ENCODE measurements at regions of chr10 and their contacts with region 1.

Region 1: GRCh38 chr10:119859420-119860258 is 13.0 kb downstream of the MCMBP start:
- DNase-seq: peak; percentile 24 to 47
- ATAC-seq: peak in 1 of 2 experiments; percentile 63; a peak in 3 of 6 replicates
- H3K4me3 ChIP-seq: no peak overlapping the region
- H3K27ac ChIP-seq: no peak overlapping the region
- H3K4me1 ChIP-seq: peaks cover 15% of the 10 kb centered on the region
- CTCF ChIP-seq: peak; percentile 80
- EP300 ChIP-seq: no peak
- POLR2A ChIP-seq: no peak
- RAD21 ChIP-seq: peak; percentile 68 to 75

Region 2: DNA sequence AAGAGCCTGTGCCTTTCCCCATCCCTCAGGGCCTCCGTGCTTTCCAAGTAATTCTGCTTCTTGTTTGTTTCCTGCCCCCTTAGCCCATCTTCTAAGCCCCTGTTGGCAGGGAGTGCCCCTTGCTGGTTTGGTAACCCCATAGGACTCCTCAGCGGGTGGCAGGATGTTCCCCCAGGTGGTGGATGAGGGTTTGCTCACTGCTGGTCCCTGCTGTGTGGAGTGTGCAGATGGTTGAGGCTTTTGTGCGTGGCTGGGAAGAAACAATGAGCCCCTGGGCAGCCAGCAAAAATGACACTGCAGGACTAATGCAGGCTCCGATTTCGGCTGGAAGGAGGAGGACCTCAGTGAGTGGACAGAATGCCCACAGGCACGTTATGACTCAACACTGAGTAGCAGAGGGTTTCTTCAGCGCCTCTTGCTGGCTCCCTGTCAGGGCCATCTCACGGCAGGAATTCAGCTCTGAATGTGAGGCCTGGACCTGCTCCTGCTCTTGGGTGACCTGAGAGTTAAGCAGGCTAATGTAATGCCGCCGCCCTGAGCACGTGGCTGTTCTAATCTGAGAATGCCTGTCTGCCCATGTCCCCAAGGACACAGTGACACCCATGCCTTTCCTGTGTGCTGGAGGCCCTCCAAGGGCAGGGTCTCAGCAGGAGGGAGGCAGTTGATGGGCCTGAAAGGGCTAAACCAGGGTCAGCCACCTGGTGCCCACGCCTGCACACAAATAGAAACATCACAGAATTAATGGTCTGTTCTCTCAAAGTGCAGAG is 191.9 kb before region 1 on chr10:
- CTCF ChIA-PET with region 1: interaction called, 10 read pairs
- POLR2A ChIA-PET with region 1: no interaction called
- DNase-seq: peak; percentile 82 to 92
- ATAC-seq: peak; percentile 92 to 94
- H3K4me3 ChIP-seq: 0 out of 3 replicates have a peak overlapping the region, but pooled peaks have one; percentile 20
- H3K27ac ChIP-seq: peak overlapping the region; percentile 84 to 91
- H3K4me1 ChIP-seq: peaks cover 83% of the 10 kb centered on the region
- CTCF ChIP-seq: peak; percentile 20; the same call in 2 of the 3 replicates
- EP300 ChIP-seq: peak in 1 of 2 experiments; percentile 25; a peak in 1 of 5 replicates
- POLR2A ChIP-seq: no peak
- RAD21 ChIP-seq: peak; percentile 36 to 53; a peak in 4 of 5 replicates

Region 3: DNA sequence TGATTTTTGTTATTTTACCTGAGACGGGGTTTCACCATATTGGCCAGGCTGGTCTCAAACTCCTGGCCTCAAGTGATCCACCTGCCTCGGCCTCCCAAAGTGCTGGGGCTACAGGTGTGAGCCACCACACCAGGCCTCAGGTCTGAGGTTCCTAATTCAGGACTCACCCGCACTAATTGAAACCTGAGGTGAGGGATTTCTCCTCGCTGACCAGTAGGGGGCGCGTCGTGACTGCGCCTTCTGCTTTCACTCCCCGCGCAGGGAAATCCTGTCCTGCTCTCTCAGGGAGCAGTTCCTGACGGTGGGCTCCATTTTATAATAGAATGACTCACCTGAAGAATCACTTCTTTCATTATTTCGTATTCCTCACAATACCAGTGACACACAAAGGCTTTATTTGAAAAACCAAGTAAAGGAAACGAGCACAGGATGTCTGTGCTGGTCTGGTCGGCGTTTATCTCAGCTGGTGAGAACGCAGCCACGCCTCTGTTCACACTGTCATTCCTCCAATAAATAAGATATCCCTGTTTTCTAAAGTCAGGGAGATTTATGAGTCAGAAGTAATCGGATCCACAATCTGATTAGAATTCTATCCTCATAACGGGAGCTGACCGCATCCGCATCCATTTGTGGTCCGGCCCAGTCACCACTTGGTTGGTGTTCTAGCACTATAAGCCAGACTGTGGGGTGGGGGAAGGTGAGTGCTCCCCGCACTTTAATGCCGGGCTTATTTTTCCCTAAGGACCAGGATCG is 173.0 kb before region 1 on chr10:
- CTCF ChIA-PET with region 1: interaction called, 41 read pairs
- POLR2A ChIA-PET with region 1: no interaction called
- DNase-seq: peak; percentile 81
- ATAC-seq: peak; percentile 82 to 90
- H3K4me3 ChIP-seq: no peak overlapping the region
- H3K27ac ChIP-seq: peak overlapping the region in 1 of 2 experiments; percentile 42; a peak in 1 of 6 replicates
- H3K4me1 ChIP-seq: peaks cover 13% of the 10 kb centered on the region
- CTCF ChIP-seq: peak; percentile 92
- EP300 ChIP-seq: no peak
- POLR2A ChIP-seq: no peak
- RAD21 ChIP-seq: peak; percentile 90 to 93

Region 4: GRCh38 chr10:119742947-119743648 is 116.5 kb before region 1 on chr10:
- CTCF ChIA-PET with region 1: interaction called, 102 read pairs
- POLR2A ChIA-PET with region 1: no interaction called
- DNase-seq: no peak
- ATAC-seq: peak; percentile 59 to 66; a peak in 3 of 6 replicates
- H3K4me3 ChIP-seq: no peak overlapping the region
- H3K27ac ChIP-seq: no peak overlapping the region
- H3K4me1 ChIP-seq: peaks cover 14% of the 10 kb centered on the region
- CTCF ChIP-seq: no peak
- EP300 ChIP-seq: no peak
- POLR2A ChIP-seq: no peak
- RAD21 ChIP-seq: no peak

Region 5: GRCh38 chr10:119769886-119770285 is 89.8 kb before region 1 on chr10:
- CTCF ChIA-PET with region 1: interaction called, 11 read pairs
- POLR2A ChIA-PET with region 1: no interaction called
- DNase-seq: no peak
- ATAC-seq: no peak
- H3K4me3 ChIP-seq: no peak overlapping the region
- H3K27ac ChIP-seq: no peak overlapping the region
- H3K4me1 ChIP-seq: no peaks in the 10 kb centered on the region
- CTCF ChIP-seq: no peak
- EP300 ChIP-seq: no peak
- POLR2A ChIP-seq: no peak
- RAD21 ChIP-seq: no peak

Region 6: GRCh38 chr10:119834188-119834587 is 25.5 kb before region 1 on chr10:
- CTCF ChIA-PET with region 1: interaction called, 12 read pairs
- POLR2A ChIA-PET with region 1: no interaction called
- DNase-seq: no peak
- ATAC-seq: no peak
- H3K4me3 ChIP-seq: no peak overlapping the region
- H3K27ac ChIP-seq: no peak overlapping the region
- H3K4me1 ChIP-seq: 0 out of 3 replicates have a peak, but pooled peaks cover 8% of the 10 kb centered on the region
- CTCF ChIP-seq: no peak
- EP300 ChIP-seq: no peak
- POLR2A ChIP-seq: no peak
- RAD21 ChIP-seq: no peak

Region 7: GRCh38 chr10:119872860-119873681 is 13.4 kb after region 1 on chr10:
- CTCF ChIA-PET with region 1: interaction called, 44 read pairs
- POLR2A ChIA-PET with region 1: interaction called, 5 read pairs
- DNase-seq: peak; percentile 49 to 86
- ATAC-seq: peak; percentile 90 to 97
- H3K4me3 ChIP-seq: peak overlapping the region; percentile 83
- H3K27ac ChIP-seq: peak overlapping the region; percentile 94 to 98
- H3K4me1 ChIP-seq: peaks cover 21% of the 10 kb centered on the region; the same call in 2 of the 3 replicates
- CTCF ChIP-seq: no peak
- EP300 ChIP-seq: no peak
- POLR2A ChIP-seq: peak; percentile 69
- RAD21 ChIP-seq: no peak

Region 8: GRCh38 chr10:119917750-119918149 is 58.1 kb after region 1 on chr10:
- CTCF ChIA-PET with region 1: no interaction called
- POLR2A ChIA-PET with region 1: no interaction called
- DNase-seq: no peak
- ATAC-seq: peak in 1 of 2 experiments; percentile 50; a peak in 2 of 6 replicates
- H3K4me3 ChIP-seq: no peak overlapping the region
- H3K27ac ChIP-seq: no peak overlapping the region
- H3K4me1 ChIP-seq: no peaks in the 10 kb centered on the region
- CTCF ChIP-seq: peak; percentile 14; the same call in 1 of the 3 replicates
- EP300 ChIP-seq: no peak
- POLR2A ChIP-seq: no peak
- RAD21 ChIP-seq: no peak

Region 9: DNA sequence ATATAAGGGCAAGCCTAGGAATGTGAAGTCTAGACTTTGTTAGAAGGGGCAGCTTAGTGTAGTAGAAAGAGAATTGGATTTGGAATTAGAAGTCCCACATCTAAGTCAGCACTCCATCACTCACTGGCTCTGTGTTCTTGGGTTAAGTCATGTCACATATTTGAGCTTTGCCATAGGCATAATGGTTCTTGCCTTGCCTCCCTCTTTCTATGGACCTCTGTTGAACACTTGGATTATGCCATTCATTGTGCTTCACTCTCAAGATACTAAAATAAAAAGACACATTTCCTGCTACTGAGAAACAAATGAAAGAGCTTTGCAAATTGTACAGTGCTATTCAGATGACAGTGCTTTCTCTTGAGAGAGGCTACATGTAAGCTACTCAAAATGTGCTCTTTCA is 68.8 kb after region 1 on chr10:
- CTCF ChIA-PET with region 1: no interaction called
- POLR2A ChIA-PET with region 1: no interaction called
- DNase-seq: no peak
- ATAC-seq: no peak
- H3K4me3 ChIP-seq: no peak overlapping the region
- H3K27ac ChIP-seq: no peak overlapping the region
- H3K4me1 ChIP-seq: 0 out of 3 replicates have a peak, but pooled peaks cover 3% of the 10 kb centered on the region
- CTCF ChIP-seq: no peak
- EP300 ChIP-seq: no peak
- POLR2A ChIP-seq: no peak
- RAD21 ChIP-seq: no peak